HEK293 (cell line): ENCODE measurements at regions of chr17 and their contacts with region 1.

Region 1: DNA sequence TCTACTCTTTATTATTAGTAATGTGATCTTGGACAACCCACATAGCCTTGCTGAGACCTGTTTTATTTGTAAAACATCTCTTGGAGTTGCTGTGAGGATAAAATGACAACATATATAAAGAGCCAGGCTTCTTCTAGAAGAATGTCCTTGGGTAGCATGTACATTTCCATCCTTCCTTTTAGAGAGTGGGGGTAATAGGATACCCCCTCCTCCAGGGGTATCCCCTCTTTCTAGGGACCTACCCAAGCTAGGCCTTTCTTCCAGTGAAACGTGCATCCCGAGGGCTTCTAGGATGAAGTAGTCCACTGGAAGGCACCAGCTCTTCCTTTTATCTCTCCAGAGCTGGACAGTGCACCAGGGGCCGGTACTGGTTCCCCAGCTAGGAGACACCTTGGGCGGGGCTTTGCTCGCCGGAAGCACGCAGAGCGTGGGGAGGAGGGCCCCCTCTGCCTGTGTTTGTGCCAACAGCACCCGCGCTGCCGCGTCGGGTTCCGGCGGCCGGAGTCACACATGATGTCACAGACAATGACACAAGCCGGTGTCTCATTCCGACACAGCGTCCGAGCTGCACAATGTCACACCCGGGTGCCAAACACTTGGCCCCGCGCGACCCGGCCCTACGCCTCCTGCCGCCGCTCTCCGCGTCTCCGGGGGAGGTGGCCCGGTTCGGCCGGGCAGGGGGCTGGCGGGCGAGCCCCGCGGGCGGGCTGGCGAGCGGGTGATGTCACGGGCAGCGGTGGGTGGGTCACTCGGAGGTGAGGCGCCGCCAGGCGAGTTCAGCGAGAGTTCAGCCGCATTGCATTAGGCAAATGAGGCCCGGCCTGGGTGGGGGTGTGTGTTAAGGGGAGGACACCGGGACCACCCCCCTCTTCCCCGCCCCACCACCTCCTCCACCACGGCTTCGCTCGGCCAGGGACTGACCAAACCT is 23.4 kb downstream of the GJD3 start:
- H3K4me3 ChIP-seq: peak overlapping the region; percentile 69
- H3K27ac ChIP-seq: peak overlapping the region; percentile 77
- H3K4me1 ChIP-seq: peaks cover 28% of the 10 kb centered on the region
- CTCF ChIP-seq: peak; percentile 52; the same call in 1 of the 2 replicates

Region 2: GRCh38 chr17:39835038-39835786 is 505.9 kb before region 1 on chr17:
- CTCF ChIA-PET with region 1: no interaction called
- POLR2A ChIA-PET with region 1: no interaction called
- H3K4me3 ChIP-seq: no peak overlapping the region
- H3K27ac ChIP-seq: no peak overlapping the region
- H3K4me1 ChIP-seq: no peaks in the 10 kb centered on the region
- CTCF ChIP-seq: no peak

Region 3: GRCh38 chr17:40309031-40309948 is 31.9 kb before region 1 on chr17 and contains the start of gene RARA:
- CTCF ChIA-PET with region 1: interaction called, 27 read pairs
- POLR2A ChIA-PET with region 1: interaction called, 33 read pairs
- H3K4me3 ChIP-seq: no peak within 1 kb of the TSS
- H3K27ac ChIP-seq: peak within 1 kb of the TSS; percentile 70
- H3K4me1 ChIP-seq: peaks cover 29% of the 10 kb centered on the region
- CTCF ChIP-seq: no peak

Region 4: DNA sequence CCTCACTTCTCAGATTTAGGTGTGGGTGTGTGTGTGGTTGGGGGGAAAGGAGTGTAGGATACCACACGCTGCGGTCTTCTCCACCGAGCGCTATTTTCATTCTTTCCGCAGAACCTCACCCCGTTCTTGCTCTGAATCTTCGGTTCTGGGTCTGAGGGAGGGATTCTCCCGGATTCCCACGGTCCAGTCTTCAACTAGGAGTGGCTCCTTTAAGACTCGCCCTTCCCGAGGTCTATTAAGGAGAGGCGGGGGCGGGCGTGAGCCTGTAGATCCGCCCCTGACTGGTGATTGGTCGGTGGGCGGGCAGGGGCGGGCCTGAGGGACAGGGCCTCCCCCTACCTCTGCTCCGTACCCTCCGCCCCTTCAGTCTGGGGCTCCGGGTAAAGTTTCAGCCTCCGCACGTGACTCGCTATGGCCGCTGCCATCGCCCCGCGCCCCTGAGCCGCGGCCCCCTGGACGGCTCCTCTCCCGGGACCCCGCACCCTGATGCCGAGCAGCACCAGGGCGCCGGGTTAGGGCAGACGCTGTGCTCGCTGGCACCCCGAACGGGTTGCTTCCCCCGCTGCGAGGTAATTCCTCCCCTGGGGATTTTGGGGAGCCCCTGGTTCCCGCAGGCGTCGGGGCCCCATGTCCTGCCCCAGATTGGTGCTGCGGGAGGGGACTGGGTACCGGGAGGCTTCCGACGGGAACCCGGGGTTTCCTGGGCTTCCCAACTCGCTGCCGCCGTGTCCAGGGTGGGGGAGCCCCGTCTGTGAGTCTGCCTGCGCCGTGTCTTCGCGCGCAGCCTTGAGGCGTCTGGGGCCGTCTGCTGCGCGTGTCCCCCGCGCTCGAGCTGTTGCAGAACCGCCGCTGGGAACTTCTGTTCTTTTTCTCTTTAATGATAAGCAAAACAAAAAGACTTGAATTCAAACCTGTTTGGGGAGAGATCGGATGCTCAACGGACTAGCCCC is 23.0 kb before region 1 on chr17:
- CTCF ChIA-PET with region 1: interaction called, 6 read pairs
- POLR2A ChIA-PET with region 1: interaction called, 33 read pairs
- H3K4me3 ChIP-seq: peak overlapping the region; percentile 66
- H3K27ac ChIP-seq: peak overlapping the region; percentile 86
- H3K4me1 ChIP-seq: peaks cover 44% of the 10 kb centered on the region
- CTCF ChIP-seq: no peak

Region 5: GRCh38 chr17:40326014-40326831 is 14.9 kb before region 1 on chr17:
- CTCF ChIA-PET with region 1: interaction called, 3 read pairs
- POLR2A ChIA-PET with region 1: interaction called, 10 read pairs
- H3K4me3 ChIP-seq: no peak overlapping the region
- H3K27ac ChIP-seq: no peak overlapping the region
- H3K4me1 ChIP-seq: peaks cover 29% of the 10 kb centered on the region
- CTCF ChIP-seq: no peak

Region 6: GRCh38 chr17:40362696-40363110 is 21.6 kb after region 1 on chr17:
- CTCF ChIA-PET with region 1: interaction called, 67 read pairs
- POLR2A ChIA-PET with region 1: interaction called, 10 read pairs
- H3K4me3 ChIP-seq: peak overlapping the region; percentile 50
- H3K27ac ChIP-seq: peak overlapping the region; percentile 70; the same call in 1 of the 2 replicates
- H3K4me1 ChIP-seq: no peaks in the 10 kb centered on the region
- CTCF ChIP-seq: peak; percentile 97

Region 7: GRCh38 chr17:40536295-40537171 is 195.4 kb after region 1 on chr17:
- CTCF ChIA-PET with region 1: no interaction called
- POLR2A ChIA-PET with region 1: no interaction called
- H3K4me3 ChIP-seq: no peak overlapping the region
- H3K27ac ChIP-seq: no peak overlapping the region
- H3K4me1 ChIP-seq: no peaks in the 10 kb centered on the region
- CTCF ChIP-seq: no peak